ENCODE measurements at regions of chr3 and their contacts with region 1.

Region 1: GRCh38 chr3:188212308-188212969 is 58.5 kb downstream of the LPP start:
- DNase-seq: no peak
- H3K4me3 ChIP-seq: peak overlapping the region; percentile 33
- H3K27ac ChIP-seq: peak overlapping the region; percentile 8 to 17
- H3K4me1 ChIP-seq: peaks cover 14% of the 10 kb centered on the region
- H3K27me3 ChIP-seq: no peaks in the 10 kb centered on the region
- CTCF ChIP-seq: no peak
- EP300 ChIP-seq: no peak
- POLR2A ChIP-seq: no peak

Region 2: DNA sequence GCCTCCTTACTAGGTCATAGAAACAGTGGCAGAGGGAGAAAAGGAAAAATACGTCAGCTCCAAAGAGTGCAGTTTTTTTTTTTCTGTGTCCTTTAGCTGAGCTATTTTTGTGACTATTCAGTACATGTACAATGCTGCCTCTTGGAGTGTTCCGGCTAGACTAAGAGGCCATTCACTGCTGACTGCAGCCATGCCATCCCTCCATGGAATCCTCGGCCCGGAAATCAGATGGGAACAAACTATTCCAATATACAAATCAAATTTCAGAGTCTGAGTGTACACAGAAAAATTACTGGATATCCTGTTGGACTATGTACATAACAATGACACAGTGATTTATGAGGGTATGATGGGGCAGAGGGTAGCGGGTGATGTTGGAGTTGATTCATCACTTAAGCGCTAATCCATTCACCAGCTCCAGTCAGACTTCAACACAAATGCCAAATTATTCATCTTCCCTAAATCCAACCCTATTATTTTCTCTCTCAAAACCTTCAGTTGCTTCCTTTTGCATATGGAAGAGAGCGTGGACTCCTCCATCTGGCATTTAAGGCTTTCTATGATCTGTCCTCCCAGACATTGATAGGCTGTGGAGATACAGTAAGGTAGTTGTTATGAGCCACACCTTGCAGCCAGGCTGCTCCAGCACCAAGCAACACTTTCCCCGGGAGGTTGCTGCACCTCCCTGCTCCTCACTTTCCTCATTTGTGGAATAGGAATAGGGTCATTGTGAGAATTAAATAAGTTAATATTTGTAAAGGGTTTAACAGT is 50.7 kb after region 1 on chr3:
- intact Hi-C with region 1: loop called in 1 of 4 experiments (anchors 10 kb)
- DNase-seq: no peak
- H3K4me3 ChIP-seq: no peak overlapping the region
- H3K27ac ChIP-seq: no peak overlapping the region
- H3K4me1 ChIP-seq: peaks cover 15% of the 10 kb centered on the region
- H3K27me3 ChIP-seq: no peaks in the 10 kb centered on the region
- CTCF ChIP-seq: no peak
- EP300 ChIP-seq: no peak
- POLR2A ChIP-seq: no peak

Region 3: GRCh38 chr3:188400494-188401243 is 188.2 kb after region 1 on chr3:
- intact Hi-C with region 1: no loop called
- DNase-seq: no peak
- H3K4me3 ChIP-seq: no peak overlapping the region
- H3K27ac ChIP-seq: no peak overlapping the region
- H3K4me1 ChIP-seq: peaks cover 10% of the 10 kb centered on the region
- H3K27me3 ChIP-seq: no peaks in the 10 kb centered on the region
- CTCF ChIP-seq: no peak
- EP300 ChIP-seq: no peak
- POLR2A ChIP-seq: no peak